SK-N-SH (cell line): ENCODE measurements at regions of chr5 and their contacts with region 1.

Region 1: GRCh38 chr5:150846654-150847333 is 473 bp downstream of the IRGM start:
- DNase-seq: peak; percentile 80
- H3K4me3 ChIP-seq: no peak overlapping the region
- H3K27ac ChIP-seq: no peak overlapping the region
- H3K4me1 ChIP-seq: no peaks in the 10 kb centered on the region; a peak in 1 of 4 replicates
- H3K27me3 ChIP-seq: no peaks in the 10 kb centered on the region
- CTCF ChIP-seq: peak; percentile 82
- EP300 ChIP-seq: no peak
- RAD21 ChIP-seq: peak; percentile 93

Region 2: DNA sequence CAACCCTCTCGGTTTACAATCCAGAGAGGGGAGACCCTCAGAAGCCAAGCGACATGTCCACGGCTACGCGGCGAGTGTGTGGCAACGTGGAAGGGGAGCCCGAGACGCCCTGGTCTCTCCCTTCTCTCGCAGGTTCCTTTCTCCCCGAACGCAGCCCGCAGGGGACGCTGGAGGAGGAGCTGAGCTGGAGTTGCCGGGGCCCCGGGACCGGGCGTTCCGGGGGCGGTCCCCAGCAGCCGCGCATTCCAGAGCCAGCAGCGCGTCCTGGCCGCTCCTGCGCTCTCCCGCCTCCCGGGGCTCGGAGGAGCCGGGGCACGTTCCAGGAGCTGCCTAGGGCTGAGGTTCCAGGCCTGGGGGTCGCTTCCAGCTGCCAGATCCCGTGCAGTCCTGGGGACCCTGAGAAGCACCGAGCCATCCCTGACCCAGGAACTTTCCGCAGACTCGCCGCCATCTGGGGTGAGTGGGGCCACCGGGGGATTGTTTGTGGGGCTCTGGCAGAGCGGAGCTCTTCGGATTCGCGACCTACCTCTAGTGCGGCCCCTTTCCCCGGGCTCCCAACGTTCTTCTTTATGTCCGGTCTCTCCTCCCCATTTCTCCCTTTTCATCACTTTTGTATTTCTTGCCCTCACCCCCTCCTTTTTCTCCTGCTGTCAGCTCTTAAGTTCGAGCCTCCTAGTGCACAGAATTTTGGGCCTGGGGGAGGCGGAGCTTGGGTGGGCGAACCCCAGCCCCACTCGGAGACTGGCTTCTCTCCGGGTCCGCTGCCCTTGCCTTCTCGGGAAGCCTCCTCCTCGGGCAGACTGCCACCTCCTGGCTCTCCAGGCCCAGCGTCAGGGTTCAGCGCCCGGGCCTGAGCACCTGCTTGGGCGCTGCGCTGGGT is 68.0 kb before region 1 on chr5 and contains the start of gene SMIM3:
- CTCF ChIA-PET with region 1: interaction called, 14 read pairs
- POLR2A ChIA-PET with region 1: no interaction called
- DNase-seq: peak; percentile 86
- H3K4me3 ChIP-seq: peak within 1 kb of the TSS; percentile 85 to 91
- H3K27ac ChIP-seq: peak within 1 kb of the TSS; percentile 81 to 83
- H3K4me1 ChIP-seq: peaks cover 16 to 50% of the 10 kb centered on the region in 2 experiments; a peak in 3 of 4 replicates
- H3K27me3 ChIP-seq: no peaks in the 10 kb centered on the region
- CTCF ChIP-seq: peak; percentile 60
- EP300 ChIP-seq: peak in 1 of 2 experiments; percentile 50; a peak in 1 of 4 replicates
- RAD21 ChIP-seq: peak; percentile 80
- polyA plus RNA-seq, gene SMIM3: 39.9 and 44.8 TPM in 2 replicates

Region 3: DNA sequence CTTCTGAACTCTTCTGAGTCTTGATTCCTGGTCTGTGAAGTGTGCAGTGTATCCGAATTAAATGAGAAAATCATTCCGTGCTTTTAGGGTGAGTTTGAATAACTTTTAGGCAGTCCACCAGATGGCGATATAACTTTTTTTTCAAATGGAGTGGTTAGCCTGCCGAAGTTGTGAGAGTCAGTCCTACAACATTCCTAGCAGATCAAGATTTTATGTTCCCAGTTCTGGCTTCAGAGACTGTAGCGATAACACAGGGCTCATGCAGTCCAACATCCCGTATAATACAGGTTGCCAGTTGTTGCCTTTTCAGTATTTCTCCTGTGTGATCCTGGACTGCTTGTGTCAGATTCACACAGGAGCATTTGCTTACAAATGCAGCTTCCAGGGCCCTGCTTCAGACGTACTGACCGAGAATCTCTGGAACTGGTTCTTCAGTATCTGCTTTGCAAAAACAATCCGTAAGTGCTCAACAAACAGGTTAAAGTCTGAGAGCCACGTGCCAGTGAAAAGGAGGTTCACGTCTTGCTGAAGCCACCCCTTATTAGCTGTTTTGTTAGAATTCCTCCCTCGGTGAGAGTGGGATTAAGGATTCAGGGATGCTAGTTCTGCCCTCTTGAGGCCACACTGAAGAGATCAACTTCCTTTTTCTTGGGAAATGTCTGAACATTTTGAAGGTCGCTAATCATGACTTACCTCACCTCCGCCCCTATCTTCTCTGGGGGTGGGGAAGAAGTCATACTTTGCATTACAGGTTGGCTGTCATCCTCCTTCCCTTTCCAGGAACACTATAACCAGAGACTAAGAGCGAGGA is 45.5 kb before region 1 on chr5:
- CTCF ChIA-PET with region 1: interaction called, 33 read pairs
- POLR2A ChIA-PET with region 1: no interaction called
- DNase-seq: peak; percentile 36
- H3K4me3 ChIP-seq: peak overlapping the region; percentile 31 to 46; a peak in 3 of 4 replicates
- H3K27ac ChIP-seq: no peak overlapping the region; a peak in 1 of 4 replicates
- H3K4me1 ChIP-seq: no peaks in the 10 kb centered on the region; a peak in 1 of 4 replicates
- H3K27me3 ChIP-seq: no peaks in the 10 kb centered on the region
- CTCF ChIP-seq: peak; percentile 49
- EP300 ChIP-seq: no peak
- RAD21 ChIP-seq: peak; percentile 51

Region 4: GRCh38 chr5:150816946-150817345 is 29.8 kb before region 1 on chr5:
- CTCF ChIA-PET with region 1: interaction called, 13 read pairs
- POLR2A ChIA-PET with region 1: no interaction called
- DNase-seq: no peak
- H3K4me3 ChIP-seq: no peak overlapping the region
- H3K27ac ChIP-seq: no peak overlapping the region
- H3K4me1 ChIP-seq: no peaks in the 10 kb centered on the region
- H3K27me3 ChIP-seq: no peaks in the 10 kb centered on the region
- CTCF ChIP-seq: no peak
- EP300 ChIP-seq: no peak
- RAD21 ChIP-seq: no peak

Region 5: DNA sequence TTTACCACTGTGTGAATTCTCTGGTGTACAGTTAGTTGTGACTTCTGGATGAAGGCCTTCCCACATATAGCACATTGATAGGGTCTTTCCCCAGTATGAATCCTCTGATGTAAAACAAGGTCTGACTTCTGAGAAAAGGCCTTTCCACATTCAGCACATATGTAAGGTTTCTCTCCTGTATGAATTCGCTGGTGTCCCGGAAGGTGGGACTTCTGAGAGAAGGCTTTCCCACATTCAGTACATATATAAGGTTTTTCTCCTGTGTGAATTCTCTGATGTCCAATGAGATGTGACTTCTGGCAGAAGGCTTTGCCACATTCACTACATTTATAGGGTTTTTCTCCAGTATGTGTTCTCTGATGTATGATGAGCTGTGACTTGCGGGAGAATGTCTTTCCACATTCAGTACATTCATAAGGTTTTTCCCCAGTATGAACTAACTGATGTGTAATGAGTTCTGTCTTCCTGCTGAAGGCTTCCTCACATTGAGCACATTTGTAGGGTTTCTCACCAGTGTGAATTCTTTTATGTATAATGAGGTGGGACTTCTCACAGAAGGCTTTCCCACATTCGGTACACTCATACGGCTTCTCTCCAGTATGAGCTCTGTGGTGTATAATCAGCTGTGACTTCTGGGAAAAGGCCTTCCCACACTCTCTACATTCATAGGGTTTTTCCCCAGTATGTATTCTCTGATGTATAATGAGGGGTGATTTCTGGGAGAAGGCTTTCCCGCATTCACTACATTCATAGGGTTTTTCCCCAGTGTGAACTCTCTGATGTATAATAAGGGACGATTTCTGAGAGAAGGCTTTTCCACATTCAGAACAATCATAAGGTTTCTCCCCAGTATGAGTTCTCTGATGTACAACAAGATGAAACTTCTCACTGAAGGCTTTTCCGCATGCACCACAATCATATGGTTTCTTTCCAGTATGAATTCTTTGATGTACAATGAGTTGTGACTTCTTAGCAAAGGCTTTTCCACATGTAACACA is 48.9 kb after region 1 on chr5:
- CTCF ChIA-PET with region 1: no interaction called
- POLR2A ChIA-PET with region 1: no interaction called
- DNase-seq: no peak
- H3K4me3 ChIP-seq: peak overlapping the region in 1 of 2 experiments; percentile 6; a peak in 1 of 4 replicates
- H3K27ac ChIP-seq: no peak overlapping the region
- H3K4me1 ChIP-seq: no peaks in the 10 kb centered on the region
- H3K27me3 ChIP-seq: no peaks in the 10 kb centered on the region
- CTCF ChIP-seq: no peak
- EP300 ChIP-seq: no peak
- RAD21 ChIP-seq: no peak